Caco-2 (cell line): ENCODE measurements at regions of chr6 and their contacts with region 1.

Region 1: GRCh38 chr6:26553635-26554446 is 15.7 kb downstream of the HMGN4 start:
- DNase-seq: peak; percentile 74 to 86
- H3K4me3 ChIP-seq: peak overlapping the region; percentile 55
- H3K4me3 Mint-ChIP-seq: no peak overlapping the region
- H3K27ac Mint-ChIP-seq: no peak overlapping the region
- H3K4me1 ChIP-seq: peaks cover 5% of the 10 kb centered on the region; the same call in 1 of the 2 replicates
- H3K4me1 Mint-ChIP-seq: peaks cover 8% of the 10 kb centered on the region
- H3K27me3 ChIP-seq: no peaks in the 10 kb centered on the region
- H3K27me3 Mint-ChIP-seq: no peaks in the 10 kb centered on the region
- CTCF ChIP-seq: no peak

Region 2: GRCh38 chr6:26335631-26336323 is 218.1 kb before region 1 on chr6:
- CTCF ChIA-PET with region 1: no interaction called
- POLR2A ChIA-PET with region 1: no interaction called
- intact Hi-C with region 1: no loop called
- DNase-seq: no peak
- H3K4me3 ChIP-seq: no peak overlapping the region
- H3K4me3 Mint-ChIP-seq: no peak overlapping the region
- H3K27ac Mint-ChIP-seq: no peak overlapping the region
- H3K4me1 ChIP-seq: no peaks in the 10 kb centered on the region
- H3K4me1 Mint-ChIP-seq: peaks cover 21% of the 10 kb centered on the region
- H3K27me3 ChIP-seq: no peaks in the 10 kb centered on the region
- H3K27me3 Mint-ChIP-seq: no peaks in the 10 kb centered on the region
- CTCF ChIP-seq: no peak

Region 3: DNA sequence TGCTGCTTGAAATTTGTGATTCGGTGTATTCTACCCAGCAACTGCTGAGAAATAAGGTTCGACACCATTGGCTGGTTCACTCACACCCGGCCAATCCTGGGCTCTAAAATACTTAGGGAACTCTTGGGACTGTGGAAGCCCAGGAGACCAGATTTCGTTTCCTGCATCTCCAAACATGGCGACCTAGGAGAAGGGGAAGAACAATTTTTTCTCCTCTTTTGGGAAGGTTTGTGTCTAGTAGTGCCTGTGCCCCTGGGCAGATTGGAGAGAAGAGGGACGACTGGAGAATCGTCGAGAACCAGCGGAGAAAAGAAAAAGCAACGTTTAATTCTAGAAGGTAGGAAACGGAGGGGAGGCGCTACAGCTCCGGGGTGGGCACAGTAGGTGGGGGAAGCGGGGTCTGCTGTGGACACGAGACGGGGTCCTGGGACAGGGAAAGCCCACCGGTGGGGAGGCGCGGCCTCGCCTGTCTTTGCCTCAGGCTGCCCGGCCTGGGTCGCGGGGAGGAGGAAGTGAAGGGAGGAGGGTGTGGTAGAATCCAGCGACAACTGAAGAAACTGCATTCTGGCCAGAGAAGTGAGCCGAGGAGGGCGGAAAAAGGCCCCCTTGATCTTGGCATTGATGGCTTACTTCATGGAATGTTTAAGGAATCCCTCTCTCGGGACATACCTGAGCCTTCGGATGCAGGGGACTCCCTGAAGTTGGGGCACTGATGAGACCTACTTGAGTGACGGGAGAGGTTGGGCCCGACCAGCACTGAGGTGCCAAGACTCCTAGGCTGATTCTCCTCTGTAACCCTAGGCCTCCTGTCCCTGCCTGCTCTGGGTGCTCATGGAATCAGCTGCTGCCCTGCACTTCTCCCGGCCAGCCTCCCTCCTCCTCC is 95.8 kb before region 1 on chr6 and contains the start of gene BTN2A1:
- CTCF ChIA-PET with region 1: no interaction called
- POLR2A ChIA-PET with region 1: no interaction called
- intact Hi-C with region 1: no loop called
- DNase-seq: peak; percentile 81 to 82
- H3K4me3 ChIP-seq: peak within 1 kb of the TSS; percentile 84
- H3K4me3 Mint-ChIP-seq: peak within 1 kb of the TSS; percentile 92
- H3K27ac Mint-ChIP-seq: peak within 1 kb of the TSS; percentile 98
- H3K4me1 ChIP-seq: peaks cover 5% of the 10 kb centered on the region
- H3K4me1 Mint-ChIP-seq: peaks cover 6% of the 10 kb centered on the region
- H3K27me3 ChIP-seq: no peaks in the 10 kb centered on the region
- H3K27me3 Mint-ChIP-seq: no peaks in the 10 kb centered on the region
- CTCF ChIP-seq: no peak
- total RNA-seq, gene BTN2A1: 13.9 and 15.0 TPM in 2 replicates

Region 4: GRCh38 chr6:26520853-26521599 is 32.8 kb before region 1 on chr6:
- CTCF ChIA-PET with region 1: no interaction called
- POLR2A ChIA-PET with region 1: no interaction called
- intact Hi-C with region 1: loop called (anchors 1 kb)
- DNase-seq: peak; percentile 90 to 91
- H3K4me3 ChIP-seq: peak overlapping the region; percentile 94
- H3K4me3 Mint-ChIP-seq: peak overlapping the region; percentile 92
- H3K27ac Mint-ChIP-seq: peak overlapping the region; percentile 96
- H3K4me1 ChIP-seq: peaks cover 10% of the 10 kb centered on the region
- H3K4me1 Mint-ChIP-seq: peaks cover 35% of the 10 kb centered on the region
- H3K27me3 ChIP-seq: no peaks in the 10 kb centered on the region
- H3K27me3 Mint-ChIP-seq: peaks cover 3% of the 10 kb centered on the region
- CTCF ChIP-seq: no peak